HepG2 (cell line): ENCODE measurements at regions of chr2 and their contacts with region 1.

Region 1: DNA sequence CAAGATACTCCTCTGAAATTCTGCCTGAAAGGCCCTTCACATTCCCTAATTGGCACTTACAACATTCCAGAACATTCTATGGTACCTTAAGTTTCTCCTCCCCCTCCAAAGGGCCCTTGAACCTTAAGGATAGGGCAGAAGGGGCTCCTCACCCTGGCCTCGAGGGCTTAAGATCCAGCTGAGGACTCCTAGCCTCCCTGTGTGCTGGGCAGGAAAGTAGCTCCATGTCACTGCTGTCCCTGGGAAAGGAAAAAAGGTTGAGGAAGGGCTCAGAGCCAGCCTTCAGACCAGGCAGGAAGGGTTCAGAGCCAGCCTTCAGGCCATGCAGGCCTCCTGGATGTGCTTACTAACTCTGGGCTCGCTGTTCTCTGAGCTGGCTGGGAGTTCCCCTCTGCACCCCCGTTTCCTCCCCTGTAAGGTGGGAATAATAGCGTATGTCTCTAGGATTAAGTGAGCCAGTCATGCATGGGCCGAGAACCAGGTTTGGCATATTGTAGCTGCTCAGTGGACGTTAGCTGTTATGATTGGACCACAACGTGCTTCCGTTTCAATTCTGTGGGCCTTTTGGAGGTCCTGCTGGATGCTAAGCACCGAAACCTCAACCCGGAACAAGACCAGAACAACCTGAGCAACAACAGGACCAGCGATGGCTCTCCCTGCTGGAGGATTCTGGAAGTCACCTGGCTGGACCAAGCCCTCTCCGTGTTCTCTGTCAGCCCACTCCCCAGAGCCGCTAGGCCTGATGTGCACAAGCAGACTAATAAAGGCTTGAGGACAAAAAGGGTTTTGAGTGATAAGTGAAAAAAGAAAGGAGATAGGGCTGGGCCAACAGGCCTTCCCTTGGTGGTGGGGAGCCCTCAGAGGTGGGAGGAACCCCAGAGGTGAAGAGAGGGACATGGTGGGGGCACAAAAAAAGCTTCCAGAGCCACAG is 1.0 kb upstream of the B3GNT7 start:
- DNase-seq: peak; percentile 59
- ATAC-seq: peak; percentile 68
- H3K4me3 ChIP-seq: peak overlapping the region in 1 of 3 experiments; percentile 61; a peak in 1 of 6 replicates
- H3K27ac ChIP-seq: no peak overlapping the region
- H3K4me1 ChIP-seq: peaks cover 28% of the 10 kb centered on the region
- H3K27me3 ChIP-seq: peaks cover 17 to 78% of the 10 kb centered on the region in 2 experiments
- CTCF ChIP-seq: peak; percentile 71
- EP300 ChIP-seq: no peak
- POLR2A ChIP-seq: no peak
- RAD21 ChIP-seq: peak; percentile 12; the same call in 1 of the 2 replicates

Region 2: DNA sequence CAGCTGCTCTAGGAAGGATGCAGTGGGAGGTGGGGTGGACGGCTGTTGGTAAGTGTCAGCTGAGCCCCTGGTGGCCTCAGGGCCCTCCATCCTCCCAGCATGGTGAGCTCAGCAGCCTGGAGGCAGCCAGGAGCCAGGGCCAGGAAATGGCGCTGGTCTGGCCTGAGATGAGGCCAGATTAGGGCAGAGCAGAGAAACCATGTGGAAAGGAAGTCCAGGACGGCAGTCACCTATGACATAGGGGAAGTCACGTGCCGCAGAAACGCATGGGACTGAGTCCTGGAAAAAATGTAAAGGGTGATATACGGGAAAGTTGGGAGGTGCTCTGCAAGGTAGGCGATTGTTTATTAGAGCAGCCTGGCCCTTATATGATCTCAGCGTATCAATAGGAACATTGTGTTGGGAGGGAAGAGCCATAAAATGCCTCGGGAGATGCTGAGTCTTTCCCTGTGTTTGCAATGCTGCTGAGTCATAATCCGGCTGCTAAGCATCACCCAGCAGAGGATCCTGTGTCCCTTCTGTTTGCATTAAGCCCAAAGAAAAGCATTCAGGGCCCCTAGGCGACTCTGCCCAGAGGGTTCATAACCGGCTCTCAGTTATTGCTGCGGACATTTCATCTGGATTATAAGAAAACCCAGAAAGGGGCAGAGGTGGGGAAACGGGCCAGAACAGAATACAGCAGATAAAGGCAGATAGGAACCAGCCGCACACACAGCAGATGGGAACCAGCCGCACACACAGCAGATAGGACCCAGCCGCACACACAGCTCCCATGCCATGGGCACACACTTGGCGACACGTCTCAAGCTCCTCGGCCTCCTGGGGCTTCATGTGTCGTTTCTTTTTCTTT is 29.3 kb before region 1 on chr2:
- CTCF ChIA-PET with region 1: no interaction called
- POLR2A ChIA-PET with region 1: no interaction called
- in situ Hi-C with region 1: no loop called
- intact Hi-C with region 1: loop called (anchors 1 kb)
- DNase-seq: peak; percentile 92
- ATAC-seq: peak; percentile 92
- H3K4me3 ChIP-seq: peak overlapping the region in 1 of 3 experiments; percentile 12; a peak in 1 of 6 replicates
- H3K27ac ChIP-seq: peak overlapping the region; percentile 38
- H3K4me1 ChIP-seq: peaks cover 18% of the 10 kb centered on the region
- H3K27me3 ChIP-seq: no peaks in the 10 kb centered on the region
- CTCF ChIP-seq: 0 out of 2 replicates have a peak, but pooled peaks have one; percentile 3
- EP300 ChIP-seq: peak in 1 of 2 experiments; percentile 69; a peak in 2 of 4 replicates
- POLR2A ChIP-seq: 0 out of 4 replicates have a peak, but pooled peaks of 1 of the 2 experiments have one; percentile 37
- RAD21 ChIP-seq: no peak